Right ventricle myocardium inferior (tissue), 1 donor: ENCODE measurements at regions of chr14 and their contacts with region 1.

Region 1: DNA sequence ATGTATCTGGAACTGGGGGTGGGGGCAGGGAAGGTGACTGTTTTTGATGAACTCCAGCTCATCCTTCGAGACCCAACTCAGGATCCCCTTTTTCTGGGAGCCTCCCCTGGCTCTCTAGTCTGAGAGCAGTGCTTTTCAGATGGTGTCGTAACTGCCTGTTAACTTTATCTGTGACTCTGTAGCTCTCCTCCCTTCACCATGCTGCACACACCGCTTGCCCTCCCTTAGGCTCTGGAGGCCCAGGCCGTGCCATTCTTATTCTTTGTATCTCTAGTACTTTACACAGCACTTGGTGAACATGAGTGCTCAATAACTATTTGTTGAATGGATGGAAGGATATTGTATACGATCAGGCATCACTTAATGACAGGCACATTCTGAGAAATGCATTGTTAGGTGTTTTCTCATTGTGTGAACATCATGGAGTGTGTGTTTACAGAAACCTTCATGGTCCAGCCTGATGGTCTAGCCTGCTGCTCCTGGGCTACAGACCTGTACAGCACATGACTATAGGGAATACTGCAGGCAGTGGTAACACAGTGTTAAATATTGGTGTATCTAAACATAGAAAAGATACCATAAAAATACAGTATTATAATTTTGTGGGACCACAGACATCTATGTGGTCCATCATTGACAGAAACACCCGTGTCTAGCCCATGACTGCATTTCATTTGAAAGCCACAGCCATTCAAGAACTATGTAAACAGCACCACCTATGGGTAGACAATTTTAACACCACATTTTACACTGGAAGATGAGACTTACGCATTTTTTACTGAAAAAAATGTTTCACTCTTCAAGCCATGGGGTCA is 91.8 kb downstream of the EML1 start:
- DNase-seq: no peak
- ATAC-seq: peak; percentile 72

Region 2: GRCh38 chr14:99683619-99684355 is 201.3 kb before region 1 on chr14 and contains the start of gene CYP46A1:
- intact Hi-C with region 1: loop called (anchors 2 kb)
- DNase-seq: peak; percentile 99
- ATAC-seq: peak; percentile 98
- total RNA-seq, gene CYP46A1: 2.2 TPM

Region 3: DNA sequence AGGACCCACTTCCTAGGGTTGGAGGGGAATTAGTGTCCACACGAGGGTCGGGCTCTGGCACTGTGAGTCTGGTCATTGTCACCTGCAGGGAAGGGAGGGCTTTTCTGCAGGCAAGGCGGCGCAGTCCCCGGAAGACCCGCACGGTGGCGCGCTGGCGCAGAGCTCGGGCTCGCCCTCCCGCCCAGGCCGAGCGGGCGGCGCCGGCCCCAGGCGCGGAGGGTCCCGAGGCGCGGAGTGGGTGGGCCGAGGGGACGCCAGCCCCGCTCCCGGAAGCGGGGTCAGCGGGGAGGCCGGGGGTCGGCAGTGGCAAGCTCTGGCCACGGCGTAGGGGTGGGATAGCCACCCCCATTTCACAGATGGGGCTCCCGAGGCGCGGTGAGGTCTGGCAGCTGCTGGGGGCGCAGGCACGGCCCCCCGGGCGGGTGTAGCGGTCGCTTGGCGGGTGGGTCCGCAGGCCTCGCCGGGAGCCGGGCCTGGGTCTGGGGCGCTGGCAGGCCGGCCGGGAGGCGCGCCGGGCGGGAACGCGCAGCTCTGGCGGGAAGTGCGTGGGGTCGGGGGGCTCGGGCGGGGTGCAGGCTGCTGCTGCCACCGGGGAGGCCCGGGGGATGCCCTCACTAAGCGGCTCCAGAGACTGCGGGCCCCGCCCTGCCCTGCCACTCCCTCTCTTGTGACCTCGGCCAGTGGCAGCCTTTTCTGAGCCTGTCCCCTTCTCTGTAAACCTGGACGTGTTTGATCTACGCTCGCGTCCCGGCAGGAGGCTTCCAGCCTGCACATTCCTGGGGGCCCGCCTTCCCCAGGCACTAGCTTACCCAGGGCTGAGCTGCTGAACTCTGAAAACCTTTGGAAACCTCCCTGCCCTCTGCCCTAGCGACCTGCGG is 154.8 kb before region 1 on chr14:
- intact Hi-C with region 1: loop called (anchors 1 kb)
- DNase-seq: peak; percentile 80
- ATAC-seq: peak; percentile 70

Region 4: GRCh38 chr14:100037353-100037752 is 152.3 kb after region 1 on chr14:
- intact Hi-C with region 1: no loop called
- DNase-seq: no peak
- ATAC-seq: no peak